Activated CD8-positive, alpha-beta T cell treated with anti-CD3 and anti-CD28 coated beads for 36 hours (primary cell): ENCODE measurements at regions of chr11 and their contacts with region 1.

Region 1: GRCh38 chr11:72471005-72471898 is 36.9 kb upstream of the CLPB start:
- DNase-seq: peak; percentile 68
- ATAC-seq: peak; percentile 96
- H3K4me3 Mint-ChIP-seq: peak overlapping the region; percentile 15
- H3K27ac Mint-ChIP-seq: no peak overlapping the region
- H3K4me1 Mint-ChIP-seq: peaks cover 2% of the 10 kb centered on the region
- H3K27me3 Mint-ChIP-seq: peaks cover 19% of the 10 kb centered on the region
- CTCF ChIP-seq: peak; percentile 66

Region 2: DNA sequence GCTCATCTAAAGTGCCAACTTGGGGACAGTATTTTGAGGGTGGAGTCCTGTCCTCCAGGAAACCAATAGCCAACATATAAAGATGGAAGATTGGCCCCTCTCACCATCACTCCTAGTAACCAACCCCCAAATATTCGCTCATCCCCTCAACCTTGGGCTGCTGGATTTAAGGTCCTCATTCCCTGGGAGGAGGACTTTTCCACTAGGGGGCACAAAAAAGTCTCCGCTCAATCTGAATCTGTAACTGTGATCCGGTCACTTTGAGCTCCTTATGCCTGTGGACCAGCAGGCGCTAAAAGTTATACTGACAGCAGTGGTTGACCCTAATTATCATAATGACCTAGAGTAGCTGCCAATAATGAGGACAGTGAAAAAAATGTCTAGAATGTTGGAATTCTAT is 16.5 kb before region 1 on chr11:
- CTCF ChIA-PET with region 1: interaction called, 39 read pairs
- POLR2A ChIA-PET with region 1: no interaction called
- intact Hi-C with region 1: no loop called
- DNase-seq: no peak
- ATAC-seq: no peak
- H3K4me3 Mint-ChIP-seq: no peak overlapping the region
- H3K27ac Mint-ChIP-seq: no peak overlapping the region
- H3K4me1 Mint-ChIP-seq: no peaks in the 10 kb centered on the region
- H3K27me3 Mint-ChIP-seq: no peaks in the 10 kb centered on the region
- CTCF ChIP-seq: no peak

Region 3: DNA sequence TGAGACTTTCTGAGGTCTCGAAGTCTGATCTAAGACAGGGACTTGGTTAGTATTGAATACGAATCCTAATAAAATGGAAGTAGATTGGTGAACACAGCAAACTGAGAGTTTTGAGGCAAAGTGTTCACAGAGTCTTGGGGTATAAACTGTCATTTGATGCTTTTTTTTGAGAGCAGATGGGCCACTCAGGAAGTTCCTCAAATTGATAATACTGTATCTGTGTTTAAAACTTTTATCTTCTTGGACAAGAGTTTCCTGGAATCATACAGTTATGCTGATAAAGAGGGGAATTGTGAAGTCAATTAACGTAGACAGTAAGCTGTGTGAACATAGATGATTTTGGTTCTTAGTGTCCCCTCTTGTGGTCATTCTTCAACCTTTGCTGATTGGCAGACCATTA is 43.1 kb after region 1 on chr11:
- CTCF ChIA-PET with region 1: interaction called, 16 read pairs
- POLR2A ChIA-PET with region 1: no interaction called
- intact Hi-C with region 1: no loop called
- DNase-seq: no peak
- ATAC-seq: no peak
- H3K4me3 Mint-ChIP-seq: no peak overlapping the region
- H3K27ac Mint-ChIP-seq: no peak overlapping the region
- H3K4me1 Mint-ChIP-seq: peaks cover 4% of the 10 kb centered on the region
- H3K27me3 Mint-ChIP-seq: no peaks in the 10 kb centered on the region
- CTCF ChIP-seq: no peak

Region 4: DNA sequence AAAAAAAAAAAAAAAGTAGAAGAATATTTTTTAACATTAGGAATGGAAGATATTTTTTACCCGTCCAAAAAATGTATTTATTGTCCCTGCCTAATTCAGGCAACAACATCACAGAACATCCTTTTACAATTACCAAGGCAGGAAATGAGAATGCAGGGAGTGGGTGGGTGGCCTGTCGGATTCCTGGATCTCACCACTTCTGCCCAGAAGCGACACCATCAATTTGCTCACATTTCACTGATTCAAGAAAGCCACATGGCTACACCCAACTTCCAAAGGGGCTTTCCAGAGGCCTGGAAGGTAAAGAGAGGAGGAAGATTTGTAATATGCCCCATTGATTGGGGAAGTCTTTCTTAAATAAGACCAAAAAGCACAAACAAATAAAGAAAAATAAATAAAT is 56.9 kb after region 1 on chr11:
- CTCF ChIA-PET with region 1: no interaction called
- POLR2A ChIA-PET with region 1: no interaction called
- intact Hi-C with region 1: no loop called
- DNase-seq: no peak
- ATAC-seq: no peak
- H3K4me3 Mint-ChIP-seq: no peak overlapping the region
- H3K27ac Mint-ChIP-seq: no peak overlapping the region
- H3K4me1 Mint-ChIP-seq: no peaks in the 10 kb centered on the region
- H3K27me3 Mint-ChIP-seq: peaks cover 7% of the 10 kb centered on the region
- CTCF ChIP-seq: no peak

Region 5: GRCh38 chr11:72561856-72562255 is 90.6 kb after region 1 on chr11:
- CTCF ChIA-PET with region 1: interaction called, 21 read pairs
- POLR2A ChIA-PET with region 1: no interaction called
- intact Hi-C with region 1: no loop called
- DNase-seq: no peak
- ATAC-seq: no peak
- H3K4me3 Mint-ChIP-seq: no peak overlapping the region
- H3K27ac Mint-ChIP-seq: no peak overlapping the region
- H3K4me1 Mint-ChIP-seq: no peaks in the 10 kb centered on the region
- H3K27me3 Mint-ChIP-seq: no peaks in the 10 kb centered on the region
- CTCF ChIP-seq: no peak

Region 6: GRCh38 chr11:72591785-72592490 is 120.7 kb after region 1 on chr11:
- CTCF ChIA-PET with region 1: interaction called, 20 read pairs
- POLR2A ChIA-PET with region 1: no interaction called
- intact Hi-C with region 1: no loop called
- DNase-seq: peak; percentile 88
- ATAC-seq: peak; percentile 97
- H3K4me3 Mint-ChIP-seq: no peak overlapping the region
- H3K27ac Mint-ChIP-seq: peak overlapping the region; percentile 69
- H3K4me1 Mint-ChIP-seq: peaks cover 31% of the 10 kb centered on the region
- H3K27me3 Mint-ChIP-seq: peaks cover 36% of the 10 kb centered on the region
- CTCF ChIP-seq: no peak

Region 7: GRCh38 chr11:72821883-72822799 is 350.9 kb after region 1 on chr11:
- CTCF ChIA-PET with region 1: no interaction called
- POLR2A ChIA-PET with region 1: no interaction called
- intact Hi-C with region 1: no loop called
- DNase-seq: peak; percentile 80
- ATAC-seq: peak; percentile 89
- H3K4me3 Mint-ChIP-seq: peak overlapping the region; percentile 62
- H3K27ac Mint-ChIP-seq: peak overlapping the region; percentile 24
- H3K4me1 Mint-ChIP-seq: peaks cover 19% of the 10 kb centered on the region
- H3K27me3 Mint-ChIP-seq: no peaks in the 10 kb centered on the region
- CTCF ChIP-seq: no peak